ENCODE measurements at regions of chr9 and their contacts with region 1.

Region 1: DNA sequence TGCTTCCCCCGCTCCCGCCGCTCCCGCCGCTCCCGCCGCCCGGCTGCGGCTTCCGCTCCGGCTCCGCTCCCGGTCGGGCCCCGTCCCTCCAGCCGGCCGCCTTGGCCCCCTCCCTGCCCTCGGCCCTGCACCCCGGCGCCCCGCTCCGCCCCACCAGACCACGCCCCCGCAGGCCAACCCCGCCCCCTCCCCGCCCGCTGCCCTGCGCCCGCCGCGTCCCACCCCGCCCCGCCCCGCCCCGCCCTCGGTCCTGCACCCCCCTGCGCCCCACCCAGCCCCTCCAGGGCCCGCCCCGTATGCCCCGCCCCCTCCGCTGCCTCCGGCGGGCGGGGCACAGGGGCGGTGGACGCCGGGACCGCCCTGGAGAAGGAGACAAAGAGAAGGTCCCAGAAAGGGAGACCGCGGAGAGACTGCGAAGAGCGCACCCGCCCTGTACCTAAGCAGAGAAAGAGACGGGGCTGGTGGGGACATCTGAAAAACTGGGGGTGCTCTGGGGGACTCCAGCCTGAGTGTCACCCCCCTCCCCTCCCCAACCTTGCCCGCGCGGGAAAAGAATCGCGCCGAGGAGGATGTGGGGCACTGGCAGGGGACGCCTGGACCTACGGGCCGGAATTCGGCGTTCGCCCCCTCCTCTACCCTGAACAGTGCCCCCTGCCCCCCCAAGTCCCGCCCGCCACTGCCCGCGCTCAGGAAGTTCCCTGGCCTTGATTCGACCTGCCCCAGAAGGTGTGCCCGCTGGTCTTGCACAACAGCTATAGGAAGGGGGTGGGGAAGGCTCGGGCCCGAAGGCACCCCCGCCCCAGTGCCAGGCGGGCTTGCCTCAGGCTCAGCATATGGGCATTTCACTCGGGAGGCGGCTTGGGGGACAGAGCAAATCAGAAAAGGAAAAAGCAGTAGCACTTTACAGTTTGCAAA is 42.8 kb upstream of the STXBP1 start:
- DNase-seq: peak; percentile 80 to 94 (median 91)
- ATAC-seq: peak; percentile 90 to 93
- H3K4me3 ChIP-seq: peak overlapping the region; percentile 94
- H3K27ac ChIP-seq: peak overlapping the region; percentile 81
- H3K4me1 ChIP-seq: peaks cover 5% of the 10 kb centered on the region
- H3K27me3 ChIP-seq: no peaks in the 10 kb centered on the region

Region 2: GRCh38 chr9:127519301-127520166 is 49.7 kb before region 1 on chr9:
- intact Hi-C with region 1: loop called in 3 of 4 experiments (anchors 5 kb)
- DNase-seq: peak in 2 of 3 donors; percentile 37 to 60
- ATAC-seq: peak; percentile 6 to 39
- H3K4me3 ChIP-seq: no peak overlapping the region
- H3K27ac ChIP-seq: peak overlapping the region; percentile 11
- H3K4me1 ChIP-seq: peaks cover 6% of the 10 kb centered on the region
- H3K27me3 ChIP-seq: no peaks in the 10 kb centered on the region

Measured in right cardiac atrium (tissue), 5 donors.